Activated CD4-positive, alpha-beta memory T cell treated with anti-CD3 and anti-CD28 coated beads for 36 hours (primary cell): ENCODE measurements at regions of chr1 and their contacts with region 1.

Region 1: GRCh38 chr1:5954964-5955363 is 37.3 kb downstream of the NPHP4 start:
- DNase-seq: no peak
- H3K4me3 Mint-ChIP-seq: peak overlapping the region; percentile 2
- H3K27ac Mint-ChIP-seq: peak overlapping the region; percentile 78
- H3K4me1 Mint-ChIP-seq: peaks cover 20% of the 10 kb centered on the region
- H3K27me3 Mint-ChIP-seq: no peaks in the 10 kb centered on the region

Region 2: GRCh38 chr1:5938101-5938646 is 16.8 kb before region 1 on chr1:
- CTCF ChIA-PET with region 1: no interaction called
- POLR2A ChIA-PET with region 1: interaction called, 10 read pairs
- intact Hi-C with region 1: no loop called
- DNase-seq: no peak
- H3K4me3 Mint-ChIP-seq: no peak overlapping the region
- H3K27ac Mint-ChIP-seq: no peak overlapping the region
- H3K4me1 Mint-ChIP-seq: no peaks in the 10 kb centered on the region
- H3K27me3 Mint-ChIP-seq: no peaks in the 10 kb centered on the region

Region 3: GRCh38 chr1:5992026-5992813 is 37.3 kb after region 1 on chr1 and contains the start of gene NPHP4:
- CTCF ChIA-PET with region 1: no interaction called
- POLR2A ChIA-PET with region 1: interaction called, 3 read pairs
- intact Hi-C with region 1: loop called (anchors 2 kb)
- DNase-seq: peak; percentile 100
- H3K4me3 Mint-ChIP-seq: peak within 1 kb of the TSS; percentile 86
- H3K27ac Mint-ChIP-seq: peak within 1 kb of the TSS; percentile 88
- H3K4me1 Mint-ChIP-seq: peaks cover 21% of the 10 kb centered on the region
- H3K27me3 Mint-ChIP-seq: no peaks in the 10 kb centered on the region
- total RNA-seq, gene NPHP4: 14.0 to 14.6 TPM

Region 4: DNA sequence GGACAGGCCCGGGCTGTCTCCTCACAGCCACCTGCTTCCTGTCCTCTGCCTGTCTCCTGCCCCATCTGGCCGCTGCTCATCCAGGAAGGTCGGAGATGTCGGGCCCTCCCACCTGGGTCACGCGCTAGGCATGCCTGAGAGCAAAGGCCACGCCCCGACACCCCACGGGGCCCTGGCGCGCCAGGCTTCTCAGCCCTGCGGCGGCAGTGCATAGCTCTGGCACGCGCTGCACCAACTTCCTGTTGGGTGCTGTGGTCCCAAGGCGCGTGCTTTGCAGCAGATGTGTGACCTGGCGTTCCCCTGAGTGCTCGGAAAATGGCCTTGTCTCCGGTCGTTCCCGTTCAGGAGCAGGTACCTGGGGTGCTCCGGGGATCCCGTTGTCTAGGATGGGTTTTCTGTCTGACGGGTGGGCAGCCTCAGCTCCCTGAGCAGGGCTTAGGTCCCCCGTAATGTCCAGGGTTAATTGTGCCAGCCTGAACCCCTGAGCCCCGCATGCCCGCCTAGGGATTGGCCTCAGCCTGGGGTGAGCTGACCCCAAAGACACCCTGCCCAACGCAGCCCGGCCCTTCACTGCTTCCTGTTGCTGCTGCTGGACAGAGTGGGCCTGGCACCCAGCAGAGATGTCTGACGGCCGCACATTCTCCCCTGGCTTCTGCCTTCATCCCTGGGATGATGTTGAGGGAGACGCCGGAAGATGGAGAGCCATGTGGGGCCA is 71.3 kb after region 1 on chr1:
- CTCF ChIA-PET with region 1: interaction called, 5 read pairs
- POLR2A ChIA-PET with region 1: no interaction called
- intact Hi-C with region 1: loop called (anchors 1 kb)
- DNase-seq: peak; percentile 97
- H3K4me3 Mint-ChIP-seq: peak overlapping the region; percentile 96
- H3K27ac Mint-ChIP-seq: peak overlapping the region; percentile 97
- H3K4me1 Mint-ChIP-seq: peaks cover 43% of the 10 kb centered on the region
- H3K27me3 Mint-ChIP-seq: no peaks in the 10 kb centered on the region